ENCODE measurements at regions of chr2 and their contacts with region 1.

Region 1: DNA sequence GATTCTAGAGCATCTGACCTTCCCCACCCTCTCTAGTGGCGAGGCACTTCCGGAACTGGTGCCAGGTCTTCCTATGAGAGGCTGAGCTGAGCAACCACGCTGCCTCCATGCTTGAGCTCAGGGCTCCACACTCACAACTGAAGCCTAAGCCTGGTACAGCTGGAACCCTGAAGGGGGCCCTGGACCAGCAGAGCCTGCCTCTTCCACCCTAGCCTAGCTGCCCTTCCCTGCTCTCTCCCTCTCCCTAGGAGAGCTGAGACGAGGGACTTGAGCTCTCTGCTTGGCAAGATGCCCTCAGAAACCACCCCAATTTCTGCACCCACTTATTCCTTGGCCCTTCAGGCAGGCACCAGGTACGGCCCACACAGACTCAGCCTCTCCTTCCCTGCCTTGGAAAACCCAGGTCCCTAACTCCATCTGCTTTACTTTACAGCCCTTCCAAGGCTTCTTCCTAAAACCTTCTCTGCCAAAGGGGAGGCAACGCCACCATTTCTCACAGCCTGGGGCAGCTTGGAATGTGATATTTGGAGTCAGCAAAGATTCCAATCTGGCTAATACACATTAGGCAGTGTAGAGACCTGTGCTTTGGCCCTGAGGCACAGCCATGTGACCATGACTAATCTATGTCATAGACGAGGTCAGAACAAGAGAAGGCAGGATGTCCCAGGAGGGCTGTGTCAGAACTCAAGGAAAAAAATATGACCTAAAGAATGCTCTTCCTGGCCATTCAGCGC is 18.8 kb downstream of the COX7A2L start:
- DNase-seq: peak; percentile 82
- ATAC-seq: peak; percentile 31
- H3K4me3 ChIP-seq: no peak overlapping the region
- H3K27ac ChIP-seq: peak overlapping the region; percentile 22
- H3K4me1 ChIP-seq: peaks cover 49% of the 10 kb centered on the region
- H3K27me3 ChIP-seq: no peaks in the 10 kb centered on the region
- CTCF ChIP-seq: no peak
- EP300 ChIP-seq: no peak
- POLR2A ChIP-seq: peak in 1 of 2 experiments; percentile 61; a peak in 2 of 4 replicates
- RAD21 ChIP-seq: peak; percentile 31; the same call in 1 of the 2 replicates

Region 2: DNA sequence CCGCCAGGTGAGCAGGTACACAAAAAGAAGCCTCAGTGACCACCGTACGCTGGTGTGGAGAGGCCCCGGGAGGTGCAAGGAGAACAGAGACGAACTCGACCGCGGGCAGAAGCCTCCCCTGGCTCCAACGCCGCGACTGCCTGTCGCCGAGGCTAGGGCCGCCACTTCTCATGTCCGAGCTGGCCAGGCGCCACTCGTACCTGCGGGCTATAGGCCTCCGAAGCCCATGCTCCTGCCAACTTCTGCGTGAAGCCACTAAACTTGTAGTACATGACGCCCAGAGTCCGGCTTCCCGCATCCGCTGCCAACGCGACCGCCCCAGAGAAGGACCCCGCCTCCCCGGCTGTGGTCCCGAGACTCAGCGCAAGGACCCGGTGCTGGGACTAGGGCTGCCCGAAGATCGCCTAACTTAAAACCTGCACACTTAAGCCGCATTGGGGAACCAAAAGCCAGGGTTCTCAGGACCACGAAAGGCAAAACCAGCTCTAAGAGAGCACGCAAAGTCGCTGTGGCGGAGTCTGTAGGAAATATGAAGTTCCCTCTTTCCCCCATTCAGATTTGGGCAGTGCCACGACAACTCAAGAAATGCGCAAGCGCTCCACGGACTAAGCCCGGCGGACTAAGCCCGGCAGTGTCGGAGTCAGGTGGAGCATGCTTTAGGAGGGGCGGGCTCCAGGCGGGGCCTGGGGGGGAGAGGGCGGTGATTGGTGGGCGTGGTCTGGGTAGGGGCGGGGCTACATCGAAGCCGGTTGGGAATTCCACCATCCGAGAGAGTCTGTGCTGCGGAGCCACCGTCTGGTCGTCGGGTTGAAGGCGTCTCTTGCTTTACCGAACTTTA is 18.9 kb after region 1 on chr2 and contains the start of gene COX7A2L:
- CTCF ChIA-PET with region 1: no interaction called
- POLR2A ChIA-PET with region 1: interaction called, 4 read pairs
- in situ Hi-C with region 1: no loop called
- intact Hi-C with region 1: loop called (anchors 2 kb)
- DNase-seq: peak; percentile 96
- ATAC-seq: peak; percentile 92
- H3K4me3 ChIP-seq: peak within 1 kb of the TSS; percentile 84 to 98 (median 94)
- H3K27ac ChIP-seq: peak within 1 kb of the TSS; percentile 96
- H3K4me1 ChIP-seq: peaks cover 43% of the 10 kb centered on the region
- H3K27me3 ChIP-seq: no peaks in the 10 kb centered on the region; a peak in 1 of 5 replicates
- CTCF ChIP-seq: peak; percentile 82
- EP300 ChIP-seq: no peak
- POLR2A ChIP-seq: peak; percentile 87 to 94
- RAD21 ChIP-seq: peak; percentile 33
- total RNA-seq, gene COX7A2L: 201 and 272 TPM in 2 replicates

Region 3: GRCh38 chr2:42494355-42495233 is 152.4 kb after region 1 on chr2:
- CTCF ChIA-PET with region 1: no interaction called
- POLR2A ChIA-PET with region 1: no interaction called
- in situ Hi-C with region 1: no loop called
- intact Hi-C with region 1: no loop called
- DNase-seq: peak; percentile 87
- ATAC-seq: peak; percentile 67
- H3K4me3 ChIP-seq: peak overlapping the region; percentile 75 to 88 (median 86)
- H3K27ac ChIP-seq: peak overlapping the region; percentile 77
- H3K4me1 ChIP-seq: peaks cover 75% of the 10 kb centered on the region
- H3K27me3 ChIP-seq: no peaks in the 10 kb centered on the region
- CTCF ChIP-seq: peak; percentile 92
- EP300 ChIP-seq: peak in 1 of 2 experiments; percentile 31; a peak in 1 of 4 replicates
- POLR2A ChIP-seq: no peak
- RAD21 ChIP-seq: peak; percentile 90

Region 4: DNA sequence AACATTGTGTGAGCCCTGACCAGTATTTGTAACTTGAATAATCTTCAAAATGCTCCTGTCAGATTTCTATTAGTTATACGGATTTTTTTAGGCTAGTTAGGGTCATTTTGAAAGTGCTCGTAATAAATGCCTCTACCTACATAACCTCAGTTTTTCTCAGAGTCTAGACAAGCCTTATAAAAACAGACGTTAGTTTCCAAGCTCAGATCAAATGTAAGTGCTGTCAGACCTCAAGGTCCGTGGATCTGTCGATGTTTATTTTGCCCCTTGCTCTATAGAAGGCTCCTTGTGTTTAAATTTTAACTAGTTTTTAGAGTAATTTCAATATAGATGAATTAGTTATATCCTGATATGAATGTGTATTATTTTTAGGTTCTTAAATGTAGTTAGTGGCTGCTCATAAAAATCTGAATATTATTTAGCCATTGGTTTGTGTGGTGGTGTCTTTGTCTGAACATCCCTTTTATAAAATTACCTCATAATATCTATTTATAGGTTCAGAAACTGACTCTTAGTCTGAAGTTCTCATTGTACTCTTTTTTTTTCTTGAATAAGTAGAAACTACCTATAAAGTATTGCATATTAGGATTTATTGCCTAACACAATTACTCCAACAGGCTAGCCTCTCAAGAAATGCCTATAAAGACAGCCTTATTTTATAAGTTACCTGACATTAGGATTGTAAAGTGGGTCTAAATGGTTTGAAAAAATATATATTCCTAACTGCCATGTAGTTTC is 297.3 kb after region 1 on chr2:
- CTCF ChIA-PET with region 1: no interaction called
- POLR2A ChIA-PET with region 1: no interaction called
- in situ Hi-C with region 1: no loop called
- intact Hi-C with region 1: no loop called
- DNase-seq: peak; percentile 15
- ATAC-seq: peak; percentile 83
- H3K4me3 ChIP-seq: peak overlapping the region in 2 of 3 experiments; percentile 20 to 35; a peak in 2 of 6 replicates
- H3K27ac ChIP-seq: peak overlapping the region; percentile 60
- H3K4me1 ChIP-seq: peaks cover 25% of the 10 kb centered on the region
- H3K27me3 ChIP-seq: no peaks in the 10 kb centered on the region
- CTCF ChIP-seq: no peak
- EP300 ChIP-seq: no peak
- POLR2A ChIP-seq: no peak
- RAD21 ChIP-seq: no peak